ENCODE measurements at regions of chr5 and their contacts with region 1.

Region 1: GRCh38 chr5:139137702-139138101 is 60.5 kb downstream of the SIL1 start:
- DNase-seq: no peak

Region 2: GRCh38 chr5:138975098-138975847 is 162.4 kb before region 1 on chr5:
- intact Hi-C with region 1: loop called (anchors 10 kb)
- DNase-seq: peak in 3 of 10 donors; percentile 44 to 83 (median 45)

Region 3: GRCh38 chr5:139043157-139043905 is 94.4 kb before region 1 on chr5:
- intact Hi-C with region 1: no loop called
- DNase-seq: no peak

Region 4: DNA sequence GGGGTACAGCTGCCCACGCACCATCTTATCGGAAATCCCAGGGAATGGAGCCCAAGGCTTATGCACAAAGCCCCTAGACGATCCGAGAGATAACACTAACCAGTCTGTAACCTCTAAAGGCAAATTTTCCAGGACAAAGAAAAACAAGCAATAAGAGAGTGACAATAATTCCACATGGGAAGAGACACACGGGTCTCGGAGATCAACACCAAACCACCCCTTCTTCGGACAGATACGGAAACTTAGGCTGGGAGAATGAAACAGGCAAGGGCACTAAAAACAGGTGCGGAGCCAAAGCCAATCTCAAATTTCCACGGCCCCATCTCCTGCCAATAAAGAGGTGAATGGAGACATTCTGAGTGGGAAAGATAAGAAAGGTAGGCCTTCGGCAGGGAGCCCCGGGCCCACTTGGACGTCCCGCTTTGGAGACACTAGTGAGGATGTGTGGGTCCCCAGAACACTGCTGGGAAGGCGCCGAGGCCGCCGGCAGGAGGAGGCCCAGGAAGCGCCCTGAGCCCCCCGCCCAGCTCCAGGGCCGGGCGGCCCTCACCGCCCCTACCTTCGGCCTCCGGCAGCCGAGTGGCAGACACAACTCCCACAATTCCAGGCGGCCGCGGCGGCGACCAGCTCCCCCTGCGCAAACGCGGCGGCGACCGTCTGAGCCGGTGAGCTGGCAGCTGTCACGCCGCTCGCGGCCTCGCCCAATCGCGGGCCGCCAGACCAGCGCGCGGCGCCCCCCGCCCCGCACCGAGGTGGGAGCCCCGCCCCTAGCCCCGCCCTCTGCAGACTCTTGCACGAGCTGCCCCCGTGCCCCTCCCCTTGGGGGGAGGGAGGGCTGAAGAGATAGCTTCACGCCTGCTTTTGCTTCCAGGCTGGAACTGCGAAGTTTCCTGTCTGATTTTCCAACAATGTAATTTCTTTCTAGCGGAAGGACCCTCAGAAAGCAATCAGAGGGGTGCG is 60.3 kb after region 1 on chr5 and contains the start of gene SIL1:
- intact Hi-C with region 1: loop called (anchors 10 kb)
- DNase-seq: peak; percentile 91 to 99 (median 96)

Region 5: DNA sequence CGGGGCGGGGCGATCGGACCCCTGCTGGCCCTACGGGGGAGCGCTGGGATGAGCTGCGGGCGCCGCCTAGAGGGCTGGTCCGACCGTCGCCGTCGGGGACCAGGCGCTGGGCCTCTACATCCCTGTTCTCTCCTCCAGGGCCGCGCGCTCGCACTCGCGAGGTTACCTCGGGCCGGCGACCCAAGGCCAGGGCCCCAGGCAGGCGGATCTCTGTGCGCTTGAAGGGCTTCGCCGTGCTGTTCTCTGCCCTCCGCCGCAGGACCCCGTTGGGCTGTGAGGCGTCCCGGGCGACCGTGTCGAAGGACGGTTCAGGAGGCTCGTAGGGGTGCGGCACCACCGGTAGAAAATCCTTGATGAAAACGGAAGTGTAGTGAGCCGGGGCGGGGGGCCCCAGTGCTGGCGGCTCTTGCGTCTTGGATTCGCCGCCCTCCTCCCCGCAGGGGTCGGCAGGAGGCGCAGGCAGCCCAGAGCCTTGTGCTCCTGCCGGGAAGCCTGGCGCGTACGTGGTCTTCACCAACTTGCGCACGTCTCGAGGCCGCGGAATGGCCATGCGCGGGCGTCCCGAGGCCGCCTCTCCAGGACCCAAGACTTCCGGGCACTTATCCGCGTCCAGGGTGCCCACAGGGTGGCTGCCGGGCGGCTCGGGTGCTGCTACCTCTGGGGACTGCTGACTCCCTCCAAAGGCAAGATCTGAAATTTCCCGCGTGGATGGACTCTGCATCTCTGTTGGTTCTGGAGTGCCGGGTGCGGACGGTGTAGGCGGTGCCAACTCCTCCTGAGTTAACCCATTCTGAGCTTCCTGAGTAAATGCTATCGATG is 255.2 kb after region 1 on chr5:
- intact Hi-C with region 1: no loop called
- DNase-seq: peak in 4 of 10 donors; percentile 29 to 87 (median 52)

Measured in posterior cingulate gyrus (tissue), 11 donors.